Activated CD4-positive, alpha-beta memory T cell treated with anti-CD3 and anti-CD28 coated beads for 36 hours (primary cell): ENCODE measurements at regions of chr2 and their contacts with region 1.

Region 1: GRCh38 chr2:113248997-113249770 is 29.5 kb downstream of the PAX8 start:
- DNase-seq: peak; percentile 84
- H3K4me3 Mint-ChIP-seq: no peak overlapping the region
- H3K27ac Mint-ChIP-seq: peak overlapping the region; percentile 50
- H3K4me1 Mint-ChIP-seq: peaks cover 48% of the 10 kb centered on the region
- H3K27me3 Mint-ChIP-seq: no peaks in the 10 kb centered on the region

Region 2: GRCh38 chr2:113203901-113204519 is 45.2 kb before region 1 on chr2:
- CTCF ChIA-PET with region 1: interaction called, 17 read pairs
- POLR2A ChIA-PET with region 1: interaction called, 4 read pairs
- intact Hi-C with region 1: no loop called
- DNase-seq: peak; percentile 85
- H3K4me3 Mint-ChIP-seq: no peak overlapping the region
- H3K27ac Mint-ChIP-seq: peak overlapping the region; percentile 79
- H3K4me1 Mint-ChIP-seq: peaks cover 10% of the 10 kb centered on the region
- H3K27me3 Mint-ChIP-seq: no peaks in the 10 kb centered on the region

Region 3: DNA sequence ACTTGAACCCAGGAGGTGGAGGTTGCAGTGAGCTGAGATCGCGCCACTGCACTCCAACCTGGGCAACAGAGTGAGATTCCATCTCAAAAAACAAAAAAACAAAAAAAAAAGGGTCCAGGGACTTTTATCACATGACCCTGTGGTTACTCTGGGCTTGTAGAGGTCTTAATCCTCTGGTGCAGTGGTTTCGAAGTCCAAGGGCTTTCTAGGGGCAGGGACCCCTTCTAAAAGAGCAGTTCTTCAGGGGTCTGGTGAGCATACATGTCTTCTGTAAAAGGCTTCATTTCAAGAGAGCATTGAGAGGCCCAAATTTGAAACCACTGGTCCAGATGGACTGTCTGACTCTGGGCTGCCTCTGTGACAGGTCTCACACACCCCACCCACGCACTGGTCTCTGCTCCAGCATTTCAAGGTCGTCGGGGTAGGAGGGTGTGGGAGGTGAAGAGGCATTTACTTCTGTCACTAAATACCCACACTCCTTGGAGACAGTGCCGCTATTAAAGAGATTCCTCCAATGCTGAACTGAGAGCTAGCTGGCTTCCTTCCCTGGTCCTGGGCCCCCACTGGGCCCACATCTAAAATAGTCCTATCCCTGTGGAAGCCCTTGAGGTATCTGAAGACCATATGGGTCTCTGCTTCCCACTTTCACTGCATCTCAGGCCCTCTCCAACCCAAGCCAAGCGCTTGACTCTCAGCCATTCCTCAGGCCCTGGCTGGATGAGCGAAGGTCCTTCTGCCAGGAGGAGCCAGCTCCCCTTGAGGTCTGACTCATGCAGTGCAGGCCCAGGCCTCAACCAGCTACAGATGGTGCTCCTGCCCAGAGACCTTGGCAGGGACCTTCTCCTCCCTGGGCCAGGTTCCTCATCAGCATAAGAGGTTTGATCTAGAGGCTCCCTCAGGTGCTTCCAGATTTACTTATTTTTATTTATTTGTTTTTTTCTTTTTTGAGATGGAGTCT is 15.3 kb before region 1 on chr2:
- CTCF ChIA-PET with region 1: interaction called, 56 read pairs
- POLR2A ChIA-PET with region 1: interaction called, 4 read pairs
- intact Hi-C with region 1: loop called (anchors 1 kb)
- DNase-seq: peak; percentile 33
- H3K4me3 Mint-ChIP-seq: no peak overlapping the region
- H3K27ac Mint-ChIP-seq: no peak overlapping the region
- H3K4me1 Mint-ChIP-seq: peaks cover 30% of the 10 kb centered on the region
- H3K27me3 Mint-ChIP-seq: no peaks in the 10 kb centered on the region

Region 4: GRCh38 chr2:113273027-113273551 is 23.9 kb after region 1 on chr2:
- CTCF ChIA-PET with region 1: interaction called, 11 read pairs
- POLR2A ChIA-PET with region 1: no interaction called
- intact Hi-C with region 1: no loop called
- DNase-seq: peak; percentile 28
- H3K4me3 Mint-ChIP-seq: no peak overlapping the region
- H3K27ac Mint-ChIP-seq: no peak overlapping the region
- H3K4me1 Mint-ChIP-seq: peaks cover 9% of the 10 kb centered on the region
- H3K27me3 Mint-ChIP-seq: peaks cover 36% of the 10 kb centered on the region

Region 5: GRCh38 chr2:113370478-113371091 is 121.4 kb after region 1 on chr2:
- CTCF ChIA-PET with region 1: interaction called, 35 read pairs
- POLR2A ChIA-PET with region 1: no interaction called
- intact Hi-C with region 1: loop called (anchors 1 kb)
- DNase-seq: peak; percentile 80
- H3K4me3 Mint-ChIP-seq: no peak overlapping the region
- H3K27ac Mint-ChIP-seq: no peak overlapping the region
- H3K4me1 Mint-ChIP-seq: peaks cover 4% of the 10 kb centered on the region
- H3K27me3 Mint-ChIP-seq: peaks cover 5% of the 10 kb centered on the region

Region 6: GRCh38 chr2:113390124-113390849 is 141.1 kb after region 1 on chr2:
- CTCF ChIA-PET with region 1: interaction called, 31 read pairs
- POLR2A ChIA-PET with region 1: no interaction called
- intact Hi-C with region 1: loop called (anchors 5 kb)
- DNase-seq: peak; percentile 59
- H3K4me3 Mint-ChIP-seq: peak overlapping the region; percentile 7
- H3K27ac Mint-ChIP-seq: peak overlapping the region; percentile 38
- H3K4me1 Mint-ChIP-seq: peaks cover 11% of the 10 kb centered on the region
- H3K27me3 Mint-ChIP-seq: peaks cover 9% of the 10 kb centered on the region